PC-9 (cell line): ENCODE measurements at regions of chr11 and their contacts with region 1.

Region 1: GRCh38 chr11:69088676-69089146 is 40.0 kb downstream of the TPCN2 start:
- DNase-seq: peak; percentile 80 to 86
- H3K4me3 ChIP-seq: no peak overlapping the region
- H3K27ac ChIP-seq: no peak overlapping the region
- H3K4me1 ChIP-seq: peaks cover 8% of the 10 kb centered on the region
- H3K27me3 ChIP-seq: no peaks in the 10 kb centered on the region
- CTCF ChIP-seq: peak; percentile 90

Region 2: GRCh38 chr11:68632802-68633201 is 455.9 kb before region 1 on chr11:
- CTCF ChIA-PET with region 1: no interaction called
- POLR2A ChIA-PET with region 1: no interaction called
- intact Hi-C with region 1: loop called (anchors 1 kb)
- DNase-seq: peak; percentile 63 to 66
- H3K4me3 ChIP-seq: no peak overlapping the region
- H3K27ac ChIP-seq: no peak overlapping the region
- H3K4me1 ChIP-seq: no peaks in the 10 kb centered on the region
- H3K27me3 ChIP-seq: peaks cover 61% of the 10 kb centered on the region
- CTCF ChIP-seq: peak; percentile 87

Region 3: GRCh38 chr11:68839054-68839865 is 249.5 kb before region 1 on chr11:
- CTCF ChIA-PET with region 1: no interaction called
- POLR2A ChIA-PET with region 1: no interaction called
- intact Hi-C with region 1: loop called (anchors 10 kb)
- DNase-seq: peak; percentile 88 to 98
- H3K4me3 ChIP-seq: peak overlapping the region; percentile 56
- H3K27ac ChIP-seq: peak overlapping the region; percentile 88
- H3K4me1 ChIP-seq: peaks cover 35% of the 10 kb centered on the region
- H3K27me3 ChIP-seq: no peaks in the 10 kb centered on the region
- CTCF ChIP-seq: no peak

Region 4: GRCh38 chr11:68969386-68969785 is 119.3 kb before region 1 on chr11:
- CTCF ChIA-PET with region 1: interaction called, 12 read pairs
- POLR2A ChIA-PET with region 1: no interaction called
- intact Hi-C with region 1: no loop called
- DNase-seq: no peak
- H3K4me3 ChIP-seq: no peak overlapping the region
- H3K27ac ChIP-seq: no peak overlapping the region
- H3K4me1 ChIP-seq: no peaks in the 10 kb centered on the region
- H3K27me3 ChIP-seq: peaks cover 54% of the 10 kb centered on the region
- CTCF ChIP-seq: no peak

Region 5: DNA sequence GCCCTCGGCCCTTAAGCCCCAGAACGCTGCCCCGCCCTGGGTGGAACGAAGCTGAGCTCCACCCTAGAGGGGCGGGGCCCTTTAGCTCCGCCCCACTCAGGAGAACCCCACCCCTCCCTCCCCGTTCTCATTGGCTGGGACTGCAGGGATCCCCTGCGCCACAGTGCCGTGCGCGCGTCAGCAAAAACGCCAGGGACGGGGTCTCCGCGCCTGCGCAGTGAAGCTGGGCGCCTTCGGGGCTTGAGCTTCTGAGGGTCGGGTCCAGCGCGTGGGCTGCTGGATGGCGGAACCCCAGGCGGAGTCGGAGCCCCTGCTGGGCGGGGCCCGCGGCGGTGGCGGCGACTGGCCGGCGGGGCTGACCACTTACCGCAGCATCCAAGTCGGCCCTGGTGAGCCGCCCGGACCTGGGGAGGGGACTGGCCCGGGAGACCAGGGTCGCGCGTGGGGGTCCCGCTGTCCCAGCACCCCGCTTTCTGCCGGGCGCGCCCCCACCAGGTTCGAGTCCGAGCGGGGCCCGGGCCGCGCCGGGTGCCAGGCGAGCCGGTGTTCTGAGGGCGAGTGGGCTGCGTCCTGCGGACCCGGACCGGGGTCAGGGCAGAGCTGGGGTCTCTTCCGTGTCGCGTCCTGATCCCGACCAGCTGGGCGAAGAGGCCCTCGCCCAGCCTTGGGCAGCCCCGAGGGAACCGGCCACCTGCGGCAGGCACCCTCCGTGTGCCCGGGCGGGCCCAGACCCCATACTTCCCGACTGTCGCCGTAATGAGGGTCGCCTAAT is 39.8 kb before region 1 on chr11 and contains the start of gene TPCN2:
- CTCF ChIA-PET with region 1: no interaction called
- POLR2A ChIA-PET with region 1: no interaction called
- intact Hi-C with region 1: loop called (anchors 2 kb)
- DNase-seq: peak; percentile 86 to 91
- H3K4me3 ChIP-seq: peak within 1 kb of the TSS; percentile 82
- H3K27ac ChIP-seq: no peak within 1 kb of the TSS
- H3K4me1 ChIP-seq: peaks cover 12% of the 10 kb centered on the region
- H3K27me3 ChIP-seq: no peaks in the 10 kb centered on the region
- CTCF ChIP-seq: no peak
- total RNA-seq, gene TPCN2: 24.8 and 26.4 TPM in 2 replicates

Region 6: DNA sequence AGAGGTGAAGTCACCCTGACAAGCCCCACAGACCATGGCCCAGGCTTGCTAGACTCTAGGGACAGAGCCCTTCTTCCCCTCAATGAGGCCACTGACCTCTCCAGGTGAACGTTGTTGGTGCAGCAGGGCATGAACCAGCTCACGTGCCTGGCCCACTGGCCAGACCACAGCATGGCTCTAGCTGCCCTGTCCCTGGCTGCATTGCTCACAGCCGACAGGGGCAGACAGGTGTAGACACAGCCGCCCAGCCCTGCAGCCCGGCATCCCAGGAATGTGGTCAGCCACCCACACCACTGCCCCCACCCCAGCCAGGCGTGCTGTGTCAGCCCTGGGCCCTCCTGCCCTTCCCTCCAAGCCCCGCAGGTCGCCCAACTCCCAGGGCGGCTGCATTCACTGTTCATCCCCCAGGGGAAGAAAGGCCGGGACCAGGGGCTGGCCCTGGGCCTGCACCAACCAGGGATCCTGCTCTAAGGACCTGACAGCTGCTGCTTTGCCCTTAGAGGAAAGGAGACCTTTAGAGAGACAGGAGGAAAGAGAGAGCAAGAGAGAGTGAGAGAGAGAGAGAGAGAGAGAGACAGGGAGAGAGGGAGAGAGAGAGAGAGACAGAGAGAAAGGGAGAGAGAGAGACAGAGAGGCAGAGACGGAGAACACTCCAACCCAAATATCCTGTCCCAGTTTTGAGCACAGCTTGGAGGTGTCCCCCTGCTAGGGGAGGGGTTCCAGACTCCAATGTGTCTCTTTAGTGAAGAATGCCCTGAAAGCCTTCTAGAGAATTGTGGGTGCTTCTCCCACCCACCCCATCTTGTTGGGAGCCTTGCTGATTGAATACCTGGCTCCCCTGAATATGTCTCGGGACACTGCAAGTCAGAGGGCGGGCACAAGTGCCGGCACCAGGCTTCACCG is 348.5 kb after region 1 on chr11:
- CTCF ChIA-PET with region 1: no interaction called
- POLR2A ChIA-PET with region 1: no interaction called
- intact Hi-C with region 1: no loop called
- DNase-seq: peak; percentile 97 to 100
- H3K4me3 ChIP-seq: no peak overlapping the region
- H3K27ac ChIP-seq: peak overlapping the region; percentile 75
- H3K4me1 ChIP-seq: peaks cover 64% of the 10 kb centered on the region
- H3K27me3 ChIP-seq: no peaks in the 10 kb centered on the region
- CTCF ChIP-seq: peak; percentile 70